CD8-positive, alpha-beta T cell (primary cell): ENCODE measurements at regions of chr9 and their contacts with region 1.

Region 1: GRCh38 chr9:37079370-37080164 is 40.8 kb upstream of the ZCCHC7 start:
- DNase-seq: peak; percentile 84 to 97 (median 92)
- ATAC-seq: peak; percentile 95
- H3K4me3 ChIP-seq: peak overlapping the region; percentile 61 to 81
- H3K4me3 Mint-ChIP-seq: peak overlapping the region; percentile 92
- H3K27ac ChIP-seq: peak overlapping the region; percentile 88 to 95
- H3K27ac Mint-ChIP-seq: peak overlapping the region; percentile 98
- H3K4me1 ChIP-seq: peaks cover 41% of the 10 kb centered on the region
- H3K4me1 Mint-ChIP-seq: peaks cover 42% of the 10 kb centered on the region
- H3K27me3 ChIP-seq: no peaks in the 10 kb centered on the region
- H3K27me3 Mint-ChIP-seq: no peaks in the 10 kb centered on the region
- CTCF ChIP-seq: no peak

Region 2: GRCh38 chr9:36913393-36914211 is 166.0 kb before region 1 on chr9:
- CTCF ChIA-PET with region 1: no interaction called
- POLR2A ChIA-PET with region 1: no interaction called
- intact Hi-C with region 1: no loop called
- DNase-seq: no peak
- ATAC-seq: no peak
- H3K4me3 ChIP-seq: no peak overlapping the region
- H3K4me3 Mint-ChIP-seq: no peak overlapping the region
- H3K27ac ChIP-seq: no peak overlapping the region
- H3K27ac Mint-ChIP-seq: no peak overlapping the region
- H3K4me1 ChIP-seq: no peaks in the 10 kb centered on the region
- H3K4me1 Mint-ChIP-seq: no peaks in the 10 kb centered on the region
- H3K27me3 ChIP-seq: no peaks in the 10 kb centered on the region
- H3K27me3 Mint-ChIP-seq: peaks cover 18% of the 10 kb centered on the region
- CTCF ChIP-seq: no peak

Region 3: DNA sequence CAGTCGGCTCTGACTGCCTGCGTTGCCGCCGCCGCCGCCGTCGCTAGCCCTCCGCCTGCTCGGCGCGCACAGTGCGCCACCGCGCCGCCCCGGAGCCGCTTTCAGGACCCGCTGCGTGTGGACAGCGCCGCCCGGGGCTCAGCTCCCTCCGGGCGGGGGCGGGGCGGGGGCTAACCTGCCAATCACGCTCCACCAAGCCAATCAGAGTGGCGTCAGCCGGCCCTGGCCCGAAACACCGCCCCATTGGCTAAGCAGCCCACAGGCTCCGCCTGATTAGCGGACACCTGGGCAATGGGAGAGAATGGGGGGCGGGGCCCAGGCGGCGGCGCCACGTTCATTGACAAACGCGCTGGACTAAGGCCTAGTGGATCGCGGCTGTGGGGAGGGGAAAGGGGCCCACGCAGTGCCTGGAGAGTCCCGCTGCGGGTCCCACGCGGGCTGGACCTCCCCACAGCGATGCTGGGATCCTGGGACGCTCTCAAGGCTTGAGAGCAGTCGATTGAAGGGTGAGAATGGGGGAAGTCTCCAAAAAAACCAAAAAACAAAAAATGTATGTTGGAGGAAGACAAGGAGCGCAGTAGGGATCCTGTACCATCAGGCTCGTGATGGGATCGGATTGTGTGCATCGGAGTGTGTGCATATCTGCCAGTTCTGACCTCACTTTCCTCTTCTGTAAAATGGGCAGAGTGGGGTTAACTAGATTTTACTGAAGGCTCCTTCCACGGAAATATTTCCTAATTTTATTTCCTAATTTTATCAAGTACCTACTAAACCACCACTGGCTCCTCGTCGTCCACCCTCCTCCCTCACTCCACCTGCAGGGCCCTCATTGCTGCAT is 51.8 kb before region 1 on chr9:
- CTCF ChIA-PET with region 1: no interaction called
- POLR2A ChIA-PET with region 1: interaction called, 4 read pairs
- intact Hi-C with region 1: loop called (anchors 1 to 2 kb)
- DNase-seq: peak; percentile 63 to 89 (median 81)
- ATAC-seq: peak; percentile 95
- H3K4me3 ChIP-seq: peak overlapping the region; percentile 35 to 44
- H3K4me3 Mint-ChIP-seq: peak overlapping the region; percentile 53
- H3K27ac ChIP-seq: no peak overlapping the region
- H3K27ac Mint-ChIP-seq: no peak overlapping the region
- H3K4me1 ChIP-seq: peaks cover 54% of the 10 kb centered on the region
- H3K4me1 Mint-ChIP-seq: peaks cover 45% of the 10 kb centered on the region
- H3K27me3 ChIP-seq: peaks cover 64 to 71% of the 10 kb centered on the region in 2 experiments
- H3K27me3 Mint-ChIP-seq: peaks cover 80% of the 10 kb centered on the region
- CTCF ChIP-seq: no peak

Region 4: DNA sequence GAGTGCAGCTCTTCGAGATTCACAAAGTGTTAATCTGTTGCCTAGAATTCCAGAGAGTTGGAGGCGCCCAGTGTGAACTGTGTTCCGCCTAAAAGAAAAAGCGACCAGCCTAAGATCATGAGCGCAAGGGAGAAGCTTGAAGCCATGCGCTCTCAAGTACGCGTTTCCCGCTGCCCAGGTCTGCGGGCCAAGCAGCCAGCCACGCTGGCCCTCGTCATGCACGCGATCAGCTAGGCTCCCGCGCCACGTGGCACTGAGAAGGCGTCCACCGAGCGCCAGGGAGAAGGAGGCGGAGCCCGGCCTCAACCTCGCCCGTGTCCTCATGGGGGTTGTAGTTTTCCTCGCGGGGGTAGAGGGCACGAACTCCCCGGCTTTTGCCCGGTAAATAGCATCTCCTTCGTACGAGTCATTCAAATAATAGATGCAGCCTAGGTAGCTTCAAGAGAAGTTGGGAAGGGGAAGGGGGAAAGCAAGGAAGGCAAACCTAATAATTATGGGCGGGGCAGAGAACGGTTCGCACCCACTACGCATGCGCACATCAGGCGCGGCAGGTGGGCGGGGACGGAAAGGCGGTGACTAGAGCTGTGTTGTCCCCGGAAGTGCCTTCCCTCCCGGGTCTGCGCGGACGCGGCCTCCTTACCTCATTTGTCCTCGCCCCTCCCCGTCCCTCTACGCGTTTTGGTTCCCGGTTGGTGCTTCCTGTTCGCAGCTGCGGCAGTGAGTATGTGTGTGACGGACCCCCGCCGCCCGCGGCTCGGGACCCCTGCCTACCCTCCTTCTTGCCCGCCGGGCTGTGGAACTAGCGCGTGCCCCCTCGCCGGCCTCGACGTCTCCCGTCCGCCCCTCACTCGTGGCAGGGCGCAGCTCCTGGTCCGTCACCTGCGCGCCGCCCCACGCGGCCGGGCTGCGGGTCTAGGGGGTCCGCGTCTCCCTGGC is 40.6 kb after region 1 on chr9 and contains the start of gene ZCCHC7:
- CTCF ChIA-PET with region 1: interaction called, 6 read pairs
- POLR2A ChIA-PET with region 1: interaction called, 40 read pairs
- intact Hi-C with region 1: loop called (anchors 1 kb)
- DNase-seq: peak; percentile 95 to 98 (median 97)
- ATAC-seq: peak; percentile 94
- H3K4me3 ChIP-seq: peak within 1 kb of the TSS; percentile 66 to 77
- H3K4me3 Mint-ChIP-seq: peak within 1 kb of the TSS; percentile 97
- H3K27ac ChIP-seq: peak within 1 kb of the TSS; percentile 89 to 97
- H3K27ac Mint-ChIP-seq: peak within 1 kb of the TSS; percentile 98
- H3K4me1 ChIP-seq: peaks cover 23% of the 10 kb centered on the region
- H3K4me1 Mint-ChIP-seq: peaks cover 41% of the 10 kb centered on the region
- H3K27me3 ChIP-seq: no peaks in the 10 kb centered on the region
- H3K27me3 Mint-ChIP-seq: no peaks in the 10 kb centered on the region
- CTCF ChIP-seq: no peak
- total RNA-seq, gene ZCCHC7: 35.2 to 39.5 TPM

Region 5: DNA sequence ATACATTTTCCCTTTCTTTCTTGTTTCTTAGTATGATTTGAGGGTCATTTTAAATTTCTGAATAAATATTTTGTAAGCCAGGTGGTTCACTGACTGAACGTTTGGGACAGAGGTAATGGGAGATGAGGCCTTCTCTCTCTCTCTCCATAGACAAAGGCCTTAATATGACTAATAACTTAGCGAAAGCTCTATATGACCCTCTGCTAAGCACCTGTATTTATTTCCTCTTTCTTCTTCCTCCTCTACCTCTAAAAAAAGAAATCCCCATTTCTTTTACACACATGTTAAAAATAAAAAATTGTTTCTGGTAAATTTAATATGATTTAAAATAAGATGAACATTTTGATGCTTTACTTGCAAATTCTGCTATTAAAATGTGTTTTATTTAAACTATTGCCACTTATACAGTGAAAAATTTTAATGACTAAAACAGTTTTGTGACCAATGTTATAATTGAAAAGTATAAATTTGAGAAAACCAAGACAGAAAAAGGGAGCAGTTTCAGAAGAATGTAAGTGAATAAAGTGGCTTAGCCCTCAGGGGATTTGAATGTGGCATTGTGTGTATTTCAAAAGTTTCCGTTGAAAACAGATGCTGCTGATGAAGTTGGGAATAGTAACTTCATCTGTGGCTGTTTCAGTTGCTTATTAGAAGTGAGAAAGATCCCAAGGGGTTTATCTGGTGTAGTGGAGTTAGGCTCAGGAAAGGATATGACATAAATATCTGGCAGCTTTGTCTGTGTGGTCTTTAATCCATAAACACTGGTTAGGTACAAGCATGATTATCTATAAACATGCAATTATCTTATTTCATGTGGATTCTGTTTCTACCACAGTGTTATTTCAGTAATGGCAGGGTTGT is 214.3 kb after region 1 on chr9:
- CTCF ChIA-PET with region 1: no interaction called
- POLR2A ChIA-PET with region 1: no interaction called
- intact Hi-C with region 1: loop called in 1 of 2 experiments (anchors 10 kb)
- DNase-seq: no peak
- ATAC-seq: no peak
- H3K4me3 ChIP-seq: no peak overlapping the region
- H3K4me3 Mint-ChIP-seq: no peak overlapping the region
- H3K27ac ChIP-seq: no peak overlapping the region
- H3K27ac Mint-ChIP-seq: no peak overlapping the region
- H3K4me1 ChIP-seq: peaks cover 11% of the 10 kb centered on the region
- H3K4me1 Mint-ChIP-seq: peaks cover 60% of the 10 kb centered on the region
- H3K27me3 ChIP-seq: no peaks in the 10 kb centered on the region
- H3K27me3 Mint-ChIP-seq: no peaks in the 10 kb centered on the region
- CTCF ChIP-seq: no peak

Region 6: GRCh38 chr9:37485389-37486219 is 406.0 kb after region 1 on chr9 and contains the start of gene POLR1E:
- CTCF ChIA-PET with region 1: no interaction called
- POLR2A ChIA-PET with region 1: no interaction called
- intact Hi-C with region 1: loop called in 1 of 2 experiments (anchors 10 kb)
- DNase-seq: peak; percentile 90 to 98 (median 96)
- ATAC-seq: peak; percentile 97
- H3K4me3 ChIP-seq: peak within 1 kb of the TSS; percentile 73 to 81
- H3K4me3 Mint-ChIP-seq: peak within 1 kb of the TSS; percentile 95
- H3K27ac ChIP-seq: peak within 1 kb of the TSS; percentile 72 to 80
- H3K27ac Mint-ChIP-seq: peak within 1 kb of the TSS; percentile 95
- H3K4me1 ChIP-seq: peaks cover 26% of the 10 kb centered on the region
- H3K4me1 Mint-ChIP-seq: peaks cover 45% of the 10 kb centered on the region
- H3K27me3 ChIP-seq: peaks cover 0 to 4% of the 10 kb centered on the region in 2 experiments
- H3K27me3 Mint-ChIP-seq: peaks cover 7% of the 10 kb centered on the region
- CTCF ChIP-seq: no peak
- total RNA-seq, gene POLR1E: 27.2 to 27.8 TPM

Region 7: DNA sequence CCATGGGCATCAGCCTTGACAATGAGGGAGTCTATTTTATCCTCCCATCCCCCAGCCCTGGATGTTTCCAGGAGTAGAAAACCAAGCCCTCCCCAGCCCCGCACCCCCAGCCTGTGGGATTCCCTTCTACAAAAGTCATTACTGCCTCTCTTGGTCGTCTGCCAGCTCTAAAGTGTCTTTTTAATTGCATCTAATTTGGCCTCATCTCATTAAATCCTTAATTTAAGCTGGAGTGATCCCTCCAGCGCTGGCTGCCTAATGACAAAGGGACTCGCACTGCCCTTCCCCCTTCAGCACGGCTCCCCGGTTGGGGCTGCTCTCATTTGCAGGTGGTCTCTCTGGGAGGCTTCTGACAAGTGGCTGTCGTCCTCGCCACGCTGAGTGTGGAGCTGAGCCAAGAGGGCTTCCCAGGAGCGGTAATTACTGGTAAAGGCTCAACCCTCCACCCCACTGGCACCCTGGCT is 1205.1 kb after region 1 on chr9:
- CTCF ChIA-PET with region 1: no interaction called
- POLR2A ChIA-PET with region 1: no interaction called
- intact Hi-C with region 1: no loop called
- DNase-seq: peak in 1 of 9 experiments; percentile 45
- ATAC-seq: no peak
- H3K4me3 ChIP-seq: no peak overlapping the region
- H3K4me3 Mint-ChIP-seq: no peak overlapping the region
- H3K27ac ChIP-seq: no peak overlapping the region
- H3K27ac Mint-ChIP-seq: no peak overlapping the region
- H3K4me1 ChIP-seq: no peaks in the 10 kb centered on the region
- H3K4me1 Mint-ChIP-seq: no peaks in the 10 kb centered on the region
- H3K27me3 ChIP-seq: no peaks in the 10 kb centered on the region
- H3K27me3 Mint-ChIP-seq: no peaks in the 10 kb centered on the region
- CTCF ChIP-seq: no peak